ENCODE measurements at regions of chr17 and their contacts with region 1.

Region 1: GRCh38 chr17:45135192-45135977 is at the start of gene ACBD4:
- H3K4me3 ChIP-seq: peak within 1 kb of the TSS; percentile 67
- H3K27ac ChIP-seq: peak within 1 kb of the TSS; percentile 4; the same call in 1 of the 2 replicates
- H3K4me1 ChIP-seq: peaks cover 7% of the 10 kb centered on the region; the same call in 1 of the 2 replicates
- CTCF ChIP-seq: peak; percentile 100

Region 2: GRCh38 chr17:44775136-44775837 is 360.1 kb before region 1 on chr17:
- CTCF ChIA-PET with region 1: interaction called, 13 read pairs
- POLR2A ChIA-PET with region 1: no interaction called
- H3K4me3 ChIP-seq: peak overlapping the region; percentile 58
- H3K27ac ChIP-seq: peak overlapping the region; percentile 25; the same call in 1 of the 2 replicates
- H3K4me1 ChIP-seq: no peaks in the 10 kb centered on the region
- CTCF ChIP-seq: peak; percentile 36; the same call in 1 of the 2 replicates

Region 3: GRCh38 chr17:45108595-45109521 is 26.5 kb before region 1 on chr17:
- CTCF ChIA-PET with region 1: interaction called, 10 read pairs
- POLR2A ChIA-PET with region 1: interaction called, 3 read pairs
- H3K4me3 ChIP-seq: no peak overlapping the region
- H3K27ac ChIP-seq: peak overlapping the region; percentile 4; the same call in 1 of the 2 replicates
- H3K4me1 ChIP-seq: no peaks in the 10 kb centered on the region
- CTCF ChIP-seq: no peak

Region 4: DNA sequence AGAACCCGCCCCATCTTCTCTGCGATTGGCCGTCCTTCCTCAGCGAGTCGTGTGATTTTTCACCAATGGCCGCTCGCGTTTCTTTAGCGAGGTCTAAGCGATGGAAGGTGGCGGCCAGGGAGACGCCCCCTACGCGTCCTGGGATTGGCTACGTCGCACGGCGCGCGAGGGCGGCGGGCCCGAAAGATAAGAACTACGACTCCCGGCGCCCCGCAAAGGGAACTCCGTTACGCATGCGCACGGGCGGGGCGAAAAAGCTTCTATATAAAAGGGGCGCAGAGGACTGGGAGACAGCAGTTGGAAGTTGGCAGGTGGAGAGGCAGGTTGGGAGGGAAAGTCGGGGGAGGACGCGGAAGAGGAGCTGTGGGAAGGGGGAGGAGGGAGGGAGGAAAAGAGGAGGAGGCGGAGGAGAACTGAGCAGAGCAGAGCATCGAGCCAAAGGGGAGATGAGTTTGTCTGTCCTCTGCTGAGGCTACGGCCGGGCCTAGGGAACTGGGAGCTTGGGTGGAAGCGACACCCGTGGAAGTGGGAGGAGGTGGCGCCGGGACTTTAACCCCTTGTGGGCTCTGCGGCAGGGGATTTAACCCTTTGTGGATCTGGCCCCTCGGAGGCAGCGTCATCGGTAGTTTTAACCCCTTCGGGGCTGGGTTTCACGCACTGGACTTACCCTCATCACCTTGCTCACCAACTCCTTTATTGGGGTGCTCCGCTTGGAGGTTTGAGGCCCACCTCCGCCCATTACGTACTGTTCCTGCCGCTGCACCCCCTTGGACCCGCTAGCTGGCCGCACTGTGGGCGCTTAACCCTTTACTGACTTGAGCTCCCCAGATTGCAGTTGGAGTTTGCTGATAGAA is 13.0 kb after region 1 on chr17 and contains the start of gene HEXIM1:
- CTCF ChIA-PET with region 1: interaction called, 209 read pairs
- POLR2A ChIA-PET with region 1: interaction called, 192 read pairs
- H3K4me3 ChIP-seq: peak within 1 kb of the TSS; percentile 72
- H3K27ac ChIP-seq: peak within 1 kb of the TSS; percentile 92
- H3K4me1 ChIP-seq: peaks cover 10% of the 10 kb centered on the region; the same call in 1 of the 2 replicates
- CTCF ChIP-seq: peak; percentile 40; the same call in 1 of the 2 replicates

Region 5: DNA sequence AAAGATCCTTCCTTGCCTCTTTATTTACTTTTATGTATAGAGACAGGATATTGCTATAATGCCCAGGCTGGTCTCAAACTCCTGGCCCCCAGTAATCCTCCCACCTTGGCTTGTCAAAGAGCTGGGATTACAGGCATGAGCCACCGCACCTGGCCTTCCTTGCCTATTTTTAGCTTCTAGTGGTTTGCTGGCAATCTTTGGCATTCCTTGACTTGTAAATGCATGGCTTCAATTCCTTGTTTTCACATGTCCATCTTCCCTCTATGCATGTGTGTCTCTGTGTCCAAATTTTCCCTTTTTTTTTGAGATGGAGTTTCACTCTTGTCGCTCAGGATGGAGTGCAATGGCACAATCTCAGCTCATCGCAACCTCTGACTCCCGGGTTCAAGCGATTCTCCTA is 48.8 kb after region 1 on chr17:
- CTCF ChIA-PET with region 1: interaction called, 18 read pairs
- POLR2A ChIA-PET with region 1: no interaction called
- H3K4me3 ChIP-seq: no peak overlapping the region
- H3K27ac ChIP-seq: no peak overlapping the region
- H3K4me1 ChIP-seq: no peaks in the 10 kb centered on the region
- CTCF ChIP-seq: no peak

Region 6: GRCh38 chr17:45218895-45219661 is 83.7 kb after region 1 on chr17:
- CTCF ChIA-PET with region 1: interaction called, 52 read pairs
- POLR2A ChIA-PET with region 1: interaction called, 4 read pairs
- H3K4me3 ChIP-seq: no peak overlapping the region
- H3K27ac ChIP-seq: no peak overlapping the region
- H3K4me1 ChIP-seq: no peaks in the 10 kb centered on the region; the same call in 1 of the 2 replicates
- CTCF ChIP-seq: peak; percentile 83

Region 7: DNA sequence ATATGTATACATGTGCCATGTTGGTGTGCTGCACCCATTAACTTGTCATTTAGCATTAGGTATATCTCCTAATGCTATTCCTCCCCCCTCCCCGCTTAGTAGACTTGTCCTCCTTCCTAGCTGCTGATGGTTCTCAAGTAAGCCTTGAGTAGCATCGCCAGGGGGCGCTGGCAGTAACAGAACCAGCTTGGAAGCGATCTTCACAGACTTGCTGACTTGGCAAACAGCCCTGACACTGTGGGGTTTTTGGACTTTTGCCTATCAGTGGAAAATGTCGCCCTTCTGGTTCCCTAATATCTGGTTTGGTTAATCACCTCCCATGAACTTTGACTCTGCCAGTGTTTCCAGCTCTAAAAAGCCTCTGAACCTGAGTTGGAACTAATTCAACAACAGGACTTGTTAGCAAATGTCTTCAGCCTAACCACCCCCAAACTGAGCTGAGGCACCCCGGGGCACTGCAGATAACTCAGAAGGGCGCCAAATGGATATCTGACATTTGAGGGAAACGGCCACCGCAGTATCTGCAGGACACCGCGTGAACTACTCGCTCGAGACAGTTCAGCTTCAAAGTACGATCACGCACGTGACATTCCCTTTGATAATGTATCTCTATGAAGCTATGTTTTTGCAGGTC is 141.9 kb after region 1 on chr17:
- CTCF ChIA-PET with region 1: interaction called, 13 read pairs
- POLR2A ChIA-PET with region 1: no interaction called
- H3K4me3 ChIP-seq: no peak overlapping the region
- H3K27ac ChIP-seq: no peak overlapping the region
- H3K4me1 ChIP-seq: peaks cover 5% of the 10 kb centered on the region
- CTCF ChIP-seq: peak; percentile 55

Region 8: DNA sequence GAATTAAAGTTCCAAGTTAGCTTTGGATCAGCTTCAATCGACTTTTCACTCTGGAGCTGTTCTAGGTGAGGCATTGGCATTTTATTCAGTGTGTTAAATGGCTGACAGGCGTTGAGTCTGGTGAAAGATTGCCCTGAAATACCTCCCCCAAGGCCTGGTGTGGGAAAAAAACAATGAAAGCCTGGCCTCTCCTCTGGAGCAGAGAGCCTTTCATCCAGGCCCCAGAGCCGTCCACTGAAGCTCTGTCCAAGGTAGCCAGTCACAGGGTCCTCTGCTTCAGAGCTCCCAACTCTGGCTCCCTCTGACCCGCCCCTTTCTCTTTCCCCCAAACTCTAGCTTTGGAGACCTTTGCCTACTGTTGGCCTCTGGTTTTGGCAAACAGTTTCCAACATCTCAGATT is 525.1 kb after region 1 on chr17:
- CTCF ChIA-PET with region 1: no interaction called
- POLR2A ChIA-PET with region 1: no interaction called
- H3K4me3 ChIP-seq: no peak overlapping the region
- H3K27ac ChIP-seq: no peak overlapping the region
- H3K4me1 ChIP-seq: no peaks in the 10 kb centered on the region
- CTCF ChIP-seq: no peak